BJ (cell line): ENCODE measurements at regions of chr11 and their contacts with region 1.

Region 1: DNA sequence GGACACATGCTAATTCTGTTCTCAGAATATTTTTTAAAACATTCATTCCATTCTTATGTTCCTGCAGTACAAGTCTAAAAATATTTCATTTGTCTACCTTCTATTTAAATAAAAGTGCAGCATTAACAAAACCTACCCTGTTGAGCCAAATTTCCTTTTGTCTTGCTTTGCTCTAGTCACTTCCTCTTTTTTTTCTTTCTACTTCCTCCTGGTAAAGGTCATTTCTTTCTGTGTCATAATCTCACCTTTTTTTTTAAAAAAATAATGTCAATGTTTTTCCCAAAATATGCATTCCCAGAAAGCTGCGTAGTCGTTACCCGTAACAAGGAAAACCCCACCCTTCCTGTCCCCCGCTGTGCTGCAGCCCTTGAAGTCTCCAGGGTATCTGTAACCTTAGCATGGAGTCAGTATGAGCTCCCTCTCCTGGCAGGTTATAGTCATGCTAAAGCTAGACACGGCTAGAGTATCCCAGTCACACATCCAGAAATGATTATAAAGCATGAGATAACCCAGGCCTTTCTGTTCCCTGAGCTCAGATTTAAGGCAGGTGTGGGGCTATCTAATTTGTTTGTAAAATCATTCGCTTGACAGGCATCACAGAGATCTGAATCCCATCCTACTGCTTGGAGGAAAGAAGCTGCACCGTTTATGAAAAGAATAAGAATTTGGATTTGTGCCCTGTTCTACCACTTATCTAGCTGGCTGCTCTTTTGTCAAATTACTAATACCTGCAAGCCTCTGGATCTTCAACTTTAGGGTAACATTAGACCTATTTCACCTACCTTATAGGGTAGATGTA is 51.1 kb upstream of the EED start:
- DNase-seq: no peak
- H3K4me3 ChIP-seq: no peak overlapping the region
- H3K27me3 ChIP-seq: no peaks in the 10 kb centered on the region; the same call in 1 of the 2 replicates
- CTCF ChIP-seq: peak; percentile 73

Region 2: DNA sequence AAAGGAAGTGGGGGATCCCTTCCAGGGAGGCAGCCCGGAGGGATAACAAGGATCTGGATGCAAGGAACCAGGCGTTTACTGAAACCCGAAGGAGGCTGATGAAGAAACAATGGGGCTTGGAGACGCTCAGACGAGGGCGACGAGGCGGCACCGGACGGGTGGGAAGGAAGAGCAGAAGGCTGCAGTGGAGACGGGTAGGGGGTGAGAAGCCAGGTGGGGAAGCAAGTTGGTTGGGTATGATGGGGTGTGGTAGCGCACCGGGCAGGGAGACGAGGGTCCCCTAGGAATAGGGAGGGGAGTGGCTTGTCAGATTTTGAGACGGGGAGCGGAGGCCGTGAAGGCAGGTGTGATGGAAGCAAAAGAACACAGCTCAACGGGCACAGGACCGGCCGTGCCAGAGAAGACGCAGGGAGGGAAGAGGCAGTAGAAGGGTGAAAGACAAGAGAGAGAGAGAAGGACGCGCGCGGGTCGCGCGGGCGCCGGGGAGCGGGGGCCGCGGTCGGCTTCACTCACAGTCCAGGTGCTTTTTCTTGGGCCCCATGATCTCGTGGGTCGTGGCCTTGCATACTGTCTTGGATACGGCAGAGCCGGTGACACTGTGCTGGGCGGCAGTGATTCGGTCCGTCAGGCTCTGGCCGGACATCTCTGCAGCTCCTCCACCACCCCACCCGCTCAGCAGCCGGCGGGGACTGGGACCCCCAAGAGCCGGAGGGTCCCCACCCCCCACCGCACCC is 125.2 kb before region 1 on chr11:
- CTCF ChIA-PET with region 1: interaction called, 15 read pairs
- POLR2A ChIA-PET with region 1: no interaction called
- DNase-seq: no peak
- H3K4me3 ChIP-seq: peak overlapping the region; percentile 62
- H3K27me3 ChIP-seq: no peaks in the 10 kb centered on the region
- CTCF ChIP-seq: no peak

Region 3: GRCh38 chr11:86157797-86158373 is 35.6 kb before region 1 on chr11:
- CTCF ChIA-PET with region 1: no interaction called
- POLR2A ChIA-PET with region 1: no interaction called
- DNase-seq: no peak
- H3K4me3 ChIP-seq: no peak overlapping the region
- H3K27me3 ChIP-seq: no peaks in the 10 kb centered on the region
- CTCF ChIP-seq: no peak